OCI-LY7 (cell line): ENCODE measurements at regions of chr2 and their contacts with region 1.

Region 1: DNA sequence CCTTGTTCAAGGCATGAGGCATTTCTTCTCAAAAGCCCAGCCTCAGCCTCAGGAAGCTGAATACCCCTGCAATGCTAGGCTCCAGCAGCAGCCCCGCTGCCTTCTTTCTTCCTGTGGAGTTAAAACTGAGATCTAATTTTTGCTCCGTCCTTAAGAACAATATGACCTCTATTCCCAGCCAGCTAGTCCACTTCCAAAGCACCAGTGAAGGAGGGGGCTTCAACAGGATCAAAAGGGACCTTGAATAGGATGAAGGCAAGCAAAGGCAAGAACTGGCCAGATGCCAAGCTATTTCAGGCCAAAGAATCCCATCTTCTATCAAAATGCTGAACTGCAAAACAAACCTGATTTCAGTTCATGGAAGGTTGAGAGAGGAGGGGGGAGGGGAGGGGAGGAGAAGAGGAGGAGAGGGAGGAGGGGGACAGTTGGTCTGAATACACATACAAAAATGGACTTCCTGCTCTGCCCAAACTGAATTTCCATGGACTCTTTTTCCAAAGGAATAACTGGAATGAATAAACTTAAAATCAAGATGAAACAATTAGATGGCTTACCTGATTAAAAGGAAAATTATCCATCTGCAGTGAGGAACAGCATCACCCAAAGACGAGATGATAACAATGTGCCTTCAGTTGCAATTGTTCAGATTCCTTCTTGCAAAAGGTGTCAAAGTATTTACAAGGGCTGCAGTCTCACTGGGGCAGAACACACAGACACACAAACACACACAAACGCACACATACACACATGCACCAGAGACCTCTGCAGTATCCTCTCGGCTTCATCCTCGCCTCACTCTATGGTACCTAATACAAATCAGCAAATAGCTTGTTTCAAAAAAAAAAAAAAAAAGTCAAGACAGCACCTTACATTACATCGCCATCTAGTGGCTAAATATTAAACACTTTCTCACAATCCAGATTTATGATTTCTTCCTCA is at the start of gene SCN1A:
- DNase-seq: peak; percentile 57
- H3K4me3 ChIP-seq: no peak within 1 kb of the TSS
- H3K27ac ChIP-seq: no peak within 1 kb of the TSS
- H3K4me1 ChIP-seq: no peaks in the 10 kb centered on the region
- CTCF ChIP-seq: peak; percentile 84
- total RNA-seq, gene SCN1A: not detected in 2 replicates

Region 2: DNA sequence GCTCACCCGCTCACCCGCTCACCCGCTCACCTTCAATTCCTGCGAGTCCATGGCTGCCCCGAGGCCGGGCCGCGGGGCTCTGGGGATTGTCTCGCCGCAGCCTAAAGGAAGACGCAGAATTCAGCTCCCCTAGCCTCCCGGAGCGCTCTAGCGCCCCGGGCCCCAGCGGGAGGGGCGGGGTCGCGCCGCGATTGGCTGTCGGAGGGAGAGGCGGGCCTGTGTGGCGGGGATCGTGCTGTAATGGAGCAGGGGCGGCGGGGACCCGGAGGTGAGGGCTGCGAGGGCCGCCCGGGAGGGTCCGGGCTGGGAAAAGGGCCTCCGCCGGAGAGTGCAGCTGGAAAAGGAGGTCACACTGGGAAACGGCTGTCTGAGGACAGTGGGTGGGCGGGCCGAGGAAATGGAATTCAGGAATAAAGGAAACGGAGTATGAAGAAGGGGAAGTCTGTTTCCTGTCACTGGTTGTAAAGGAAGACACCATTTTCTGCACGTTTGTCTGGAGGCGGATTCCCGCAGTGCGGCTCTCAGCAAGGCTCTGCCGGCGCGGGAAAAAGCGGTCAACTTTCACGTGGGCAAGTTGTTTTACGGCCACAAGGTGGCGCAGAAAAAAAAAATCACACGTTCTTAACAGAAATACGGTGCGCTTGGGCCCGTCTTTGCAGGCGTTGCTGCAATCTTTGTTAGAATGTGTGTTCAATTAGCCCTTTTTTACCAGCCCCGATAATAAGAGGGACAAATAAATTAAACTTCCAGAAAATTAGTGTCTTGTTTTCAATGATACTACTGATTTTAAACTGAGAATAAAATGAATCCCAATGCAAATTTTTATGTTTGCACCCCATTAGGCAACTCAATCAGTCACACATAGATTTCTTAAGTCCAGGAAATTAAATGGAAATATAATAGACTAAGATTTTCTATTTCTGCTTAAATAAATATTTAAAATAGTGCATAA is 173.6 kb before region 1 on chr2 and contains the start of gene TTC21B:
- CTCF ChIA-PET with region 1: no interaction called
- POLR2A ChIA-PET with region 1: interaction called, 5 read pairs
- intact Hi-C with region 1: loop called (anchors 1 kb)
- DNase-seq: peak; percentile 95
- H3K4me3 ChIP-seq: peak within 1 kb of the TSS; percentile 81
- H3K27ac ChIP-seq: peak within 1 kb of the TSS; percentile 55
- H3K4me1 ChIP-seq: peaks cover 23% of the 10 kb centered on the region
- CTCF ChIP-seq: peak; percentile 87
- total RNA-seq, gene TTC21B: 29.8 and 32.6 TPM in 2 replicates

Region 3: GRCh38 chr2:166057370-166058164 is 69.9 kb before region 1 on chr2:
- CTCF ChIA-PET with region 1: no interaction called
- POLR2A ChIA-PET with region 1: no interaction called
- intact Hi-C with region 1: loop called (anchors 2 kb)
- DNase-seq: peak; percentile 17
- H3K4me3 ChIP-seq: no peak overlapping the region
- H3K27ac ChIP-seq: no peak overlapping the region
- H3K4me1 ChIP-seq: no peaks in the 10 kb centered on the region
- CTCF ChIP-seq: peak; percentile 83

Region 4: GRCh38 chr2:166193407-166193806 is 65.9 kb after region 1 on chr2:
- CTCF ChIA-PET with region 1: no interaction called
- POLR2A ChIA-PET with region 1: no interaction called
- intact Hi-C with region 1: no loop called
- DNase-seq: no peak
- H3K4me3 ChIP-seq: no peak overlapping the region
- H3K27ac ChIP-seq: no peak overlapping the region
- H3K4me1 ChIP-seq: no peaks in the 10 kb centered on the region
- CTCF ChIP-seq: no peak